Ovary (tissue), 10 donors: ENCODE measurements at regions of chr6 and their contacts with region 1.

Region 1: DNA sequence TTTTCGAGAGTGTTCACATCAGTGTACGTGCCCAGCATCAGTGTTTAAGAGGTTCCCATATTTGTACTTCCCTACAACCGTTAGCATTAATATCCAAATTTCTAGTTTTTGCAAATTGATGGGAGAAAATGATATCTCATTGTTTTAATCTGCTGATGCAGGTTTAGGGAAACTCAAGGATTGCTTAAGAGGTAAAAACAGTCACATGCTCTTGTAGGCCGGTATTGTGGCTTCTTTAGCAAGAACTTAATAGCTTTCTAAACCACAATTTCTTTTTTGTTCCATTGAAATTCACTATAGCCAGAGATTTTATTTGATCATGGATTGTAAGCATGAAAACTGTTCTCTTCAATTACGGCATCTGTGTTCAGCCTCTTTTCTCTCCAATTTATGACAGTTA is 29.5 kb downstream of the BEND6 start:
- DNase-seq: no peak
- H3K4me3 ChIP-seq: no peak overlapping the region
- H3K27ac ChIP-seq: no peak overlapping the region
- H3K4me1 ChIP-seq: no peaks in the 10 kb centered on the region
- H3K27me3 ChIP-seq: no peaks in the 10 kb centered on the region
- CTCF ChIP-seq: no peak
- EP300 ChIP-seq: no peak
- POLR2A ChIP-seq: no peak

Region 2: DNA sequence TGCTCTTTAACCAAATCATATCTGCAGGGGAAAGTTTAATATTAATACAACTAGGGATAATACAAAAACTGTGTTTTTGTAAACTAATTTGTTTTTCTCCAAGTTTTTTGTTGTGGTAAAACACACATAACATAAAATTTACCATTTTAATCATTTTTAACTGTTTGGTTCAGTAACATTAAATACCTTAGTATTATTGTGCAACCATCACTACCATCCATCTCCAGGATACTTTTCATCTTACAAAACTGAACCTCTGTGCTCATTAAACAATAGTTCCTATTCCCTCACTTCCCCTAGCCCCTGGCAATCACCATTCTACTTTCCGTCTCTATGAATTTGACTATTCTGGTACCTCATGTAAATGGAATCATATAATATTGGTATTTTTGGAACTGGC is 13.5 kb before region 1 on chr6:
- intact Hi-C with region 1: loop called in 1 of 4 experiments (anchors 1 kb)
- DNase-seq: no peak
- H3K4me3 ChIP-seq: no peak overlapping the region
- H3K27ac ChIP-seq: no peak overlapping the region
- H3K4me1 ChIP-seq: no peaks in the 10 kb centered on the region
- H3K27me3 ChIP-seq: no peaks in the 10 kb centered on the region
- CTCF ChIP-seq: no peak
- EP300 ChIP-seq: no peak
- POLR2A ChIP-seq: no peak